GM12878 (cell line): ENCODE measurements at regions of chr6 and their contacts with region 1.

Region 1: DNA sequence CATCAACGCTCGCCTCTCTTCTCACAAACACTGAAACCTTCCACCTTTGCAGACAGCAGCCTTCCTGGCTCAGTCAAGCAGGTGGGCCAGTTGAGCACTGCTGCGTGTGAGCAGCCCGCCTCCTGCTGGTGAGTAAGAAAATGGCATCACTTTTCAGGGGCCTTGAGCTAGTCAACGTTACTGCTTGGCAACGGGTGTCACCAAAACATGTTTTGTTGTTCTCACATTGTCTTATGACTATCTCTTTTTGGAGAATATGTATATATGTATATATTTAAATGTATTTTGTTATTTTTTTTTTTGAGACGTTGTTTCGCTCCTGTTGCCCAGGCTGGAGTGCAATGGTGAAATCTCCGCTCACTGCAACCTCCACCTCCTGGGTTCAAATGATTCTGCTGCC is 97.0 kb upstream of the AGPAT4 start:
- DNase-seq: peak; percentile 16
- ATAC-seq: peak; percentile 93
- H3K4me3 ChIP-seq: no peak overlapping the region
- H3K27ac ChIP-seq: no peak overlapping the region
- H3K4me1 ChIP-seq: no peaks in the 10 kb centered on the region
- H3K27me3 ChIP-seq: no peaks in the 10 kb centered on the region
- CTCF ChIP-seq: peak; percentile 90 to 98 (median 96)
- EP300 ChIP-seq: no peak
- POLR2A ChIP-seq: no peak
- RAD21 ChIP-seq: peak; percentile 98

Region 2: GRCh38 chr6:160520043-160520904 is 850.6 kb before region 1 on chr6:
- CTCF ChIA-PET with region 1: interaction called, 7 read pairs
- POLR2A ChIA-PET with region 1: no interaction called
- RAD21 ChIA-PET with region 1: interaction called, 4 read pairs
- SMC1A ChIA-PET with region 1: no interaction called
- in situ Hi-C with region 1: loop called (anchors 10 kb)
- intact Hi-C with region 1: loop called (anchors 5 kb)
- DNase-seq: no peak
- ATAC-seq: peak; percentile 89
- H3K4me3 ChIP-seq: peak overlapping the region; percentile 69; the same call in 1 of the 2 replicates
- H3K27ac ChIP-seq: no peak overlapping the region
- H3K4me1 ChIP-seq: no peaks in the 10 kb centered on the region
- H3K27me3 ChIP-seq: no peaks in the 10 kb centered on the region
- CTCF ChIP-seq: peak in 1 of 3 experiments; percentile 92; a peak in 4 of 6 replicates
- EP300 ChIP-seq: no peak
- POLR2A ChIP-seq: no peak
- RAD21 ChIP-seq: peak; percentile 74

Region 3: GRCh38 chr6:160750276-160750689 is 620.6 kb before region 1 on chr6:
- CTCF ChIA-PET with region 1: interaction called, 19 read pairs
- POLR2A ChIA-PET with region 1: no interaction called
- RAD21 ChIA-PET with region 1: interaction called, 9 read pairs
- SMC1A ChIA-PET with region 1: interaction called, 9 read pairs
- in situ Hi-C with region 1: loop called (anchors 5 kb)
- intact Hi-C with region 1: loop called (anchors 1 kb)
- DNase-seq: peak; percentile 39
- ATAC-seq: peak; percentile 80
- H3K4me3 ChIP-seq: no peak overlapping the region
- H3K27ac ChIP-seq: no peak overlapping the region
- H3K4me1 ChIP-seq: no peaks in the 10 kb centered on the region
- H3K27me3 ChIP-seq: no peaks in the 10 kb centered on the region
- CTCF ChIP-seq: peak; percentile 78 to 95 (median 84); a peak in 5 of 6 replicates
- EP300 ChIP-seq: no peak
- POLR2A ChIP-seq: no peak
- RAD21 ChIP-seq: peak; percentile 95

Region 4: GRCh38 chr6:160930547-160931377 is 440.1 kb before region 1 on chr6:
- CTCF ChIA-PET with region 1: interaction called, 334 read pairs
- POLR2A ChIA-PET with region 1: interaction called, 3 read pairs
- RAD21 ChIA-PET with region 1: interaction called, 162 read pairs
- SMC1A ChIA-PET with region 1: interaction called, 209 read pairs
- in situ Hi-C with region 1: loop called (anchors 5 kb)
- intact Hi-C with region 1: loop called (anchors 1 kb)
- DNase-seq: no peak
- ATAC-seq: peak; percentile 96
- H3K4me3 ChIP-seq: peak overlapping the region; percentile 31; the same call in 1 of the 2 replicates
- H3K27ac ChIP-seq: no peak overlapping the region
- H3K4me1 ChIP-seq: no peaks in the 10 kb centered on the region
- H3K27me3 ChIP-seq: no peaks in the 10 kb centered on the region
- CTCF ChIP-seq: peak; percentile 80 to 88 (median 87)
- EP300 ChIP-seq: no peak
- POLR2A ChIP-seq: no peak
- RAD21 ChIP-seq: peak; percentile 88

Region 5: GRCh38 chr6:161029195-161029809 is 341.6 kb before region 1 on chr6:
- CTCF ChIA-PET with region 1: interaction called, 10 read pairs
- POLR2A ChIA-PET with region 1: no interaction called
- RAD21 ChIA-PET with region 1: interaction called, 3 read pairs
- SMC1A ChIA-PET with region 1: interaction called, 7 read pairs
- in situ Hi-C with region 1: no loop called
- intact Hi-C with region 1: no loop called
- DNase-seq: peak; percentile 88
- ATAC-seq: peak; percentile 88
- H3K4me3 ChIP-seq: peak overlapping the region; percentile 39; the same call in 1 of the 2 replicates
- H3K27ac ChIP-seq: peak overlapping the region; percentile 80
- H3K4me1 ChIP-seq: peaks cover 21% of the 10 kb centered on the region
- H3K27me3 ChIP-seq: no peaks in the 10 kb centered on the region
- CTCF ChIP-seq: no peak
- EP300 ChIP-seq: peak; percentile 86 to 87
- POLR2A ChIP-seq: no peak
- RAD21 ChIP-seq: no peak

Region 6: GRCh38 chr6:161139766-161140553 is 230.9 kb before region 1 on chr6:
- CTCF ChIA-PET with region 1: interaction called, 4 read pairs
- POLR2A ChIA-PET with region 1: no interaction called
- RAD21 ChIA-PET with region 1: no interaction called
- SMC1A ChIA-PET with region 1: interaction called, 4 read pairs
- in situ Hi-C with region 1: loop called (anchors 25 kb)
- intact Hi-C with region 1: no loop called
- DNase-seq: no peak
- ATAC-seq: no peak
- H3K4me3 ChIP-seq: no peak overlapping the region
- H3K27ac ChIP-seq: no peak overlapping the region
- H3K4me1 ChIP-seq: peaks cover 13% of the 10 kb centered on the region
- H3K27me3 ChIP-seq: no peaks in the 10 kb centered on the region
- CTCF ChIP-seq: no peak
- EP300 ChIP-seq: no peak
- POLR2A ChIP-seq: peak; percentile 15; the same call in 1 of the 2 replicates
- RAD21 ChIP-seq: no peak